Right cardiac atrium (tissue), 5 donors: ENCODE measurements at regions of chr11 and their contacts with region 1.

Region 1: DNA sequence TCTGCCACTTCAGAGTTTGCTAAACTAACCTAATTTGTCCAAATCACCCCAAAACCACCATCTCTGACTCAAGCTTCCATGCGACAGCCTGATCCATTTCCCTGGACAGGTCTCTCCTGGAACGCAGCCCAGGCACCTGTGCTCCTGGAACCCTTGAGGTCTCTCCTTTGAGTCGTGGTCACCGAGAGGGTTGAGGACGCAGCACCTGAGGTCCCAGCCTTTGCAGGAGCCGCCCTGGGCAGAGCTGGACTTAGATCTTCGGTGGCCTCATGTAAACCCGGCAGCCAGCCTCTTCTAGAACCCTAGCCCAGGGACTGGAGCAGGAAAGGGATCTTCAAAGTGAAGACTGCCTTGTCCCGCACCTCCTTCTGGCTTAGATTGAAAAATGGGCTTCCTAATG is 37.6 kb downstream of the ASRGL1 start:
- DNase-seq: peak in 1 of 3 donors; percentile 46
- ATAC-seq: no peak
- H3K4me3 ChIP-seq: no peak overlapping the region
- H3K27ac ChIP-seq: no peak overlapping the region
- H3K4me1 ChIP-seq: no peaks in the 10 kb centered on the region
- H3K27me3 ChIP-seq: no peaks in the 10 kb centered on the region

Region 2: DNA sequence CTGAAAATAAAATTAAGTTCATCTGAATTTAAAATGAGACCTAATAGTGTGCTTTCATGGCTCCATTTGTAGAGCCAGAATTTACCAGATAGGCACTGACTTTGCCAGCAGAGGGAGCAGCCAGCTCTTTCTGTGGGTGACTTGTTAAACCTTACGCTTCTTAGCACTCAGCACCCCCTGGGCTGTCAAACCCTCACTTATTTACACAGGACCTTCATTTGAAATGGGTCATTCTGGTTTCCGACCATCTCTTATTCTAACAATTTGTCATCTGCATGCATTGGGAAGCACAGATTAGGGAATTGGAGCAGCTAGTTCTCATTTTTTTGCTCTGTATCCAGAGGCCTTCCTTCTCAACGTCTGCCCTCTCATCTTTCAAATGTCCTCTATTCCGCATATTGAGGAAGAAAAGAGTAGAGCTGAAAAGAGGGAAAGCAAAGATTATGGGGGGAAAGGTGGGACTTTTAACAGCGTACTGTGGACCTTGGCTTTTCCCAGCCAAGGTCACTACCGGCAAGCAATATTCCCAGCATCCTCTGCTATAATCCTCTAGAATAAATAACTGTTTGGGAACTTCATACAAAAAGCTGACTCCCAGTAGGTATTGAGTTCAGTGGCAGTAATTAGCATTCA is 34.4 kb before region 1 on chr11:
- intact Hi-C with region 1: loop called in 1 of 4 experiments (anchors 5 kb)
- DNase-seq: peak; percentile 45 to 78 (median 67)
- ATAC-seq: peak; percentile 34 to 48
- H3K4me3 ChIP-seq: no peak overlapping the region
- H3K27ac ChIP-seq: no peak overlapping the region
- H3K4me1 ChIP-seq: no peaks in the 10 kb centered on the region
- H3K27me3 ChIP-seq: no peaks in the 10 kb centered on the region